OCI-LY7 (cell line): ENCODE measurements at regions of chr5 and their contacts with region 1.

Region 1: DNA sequence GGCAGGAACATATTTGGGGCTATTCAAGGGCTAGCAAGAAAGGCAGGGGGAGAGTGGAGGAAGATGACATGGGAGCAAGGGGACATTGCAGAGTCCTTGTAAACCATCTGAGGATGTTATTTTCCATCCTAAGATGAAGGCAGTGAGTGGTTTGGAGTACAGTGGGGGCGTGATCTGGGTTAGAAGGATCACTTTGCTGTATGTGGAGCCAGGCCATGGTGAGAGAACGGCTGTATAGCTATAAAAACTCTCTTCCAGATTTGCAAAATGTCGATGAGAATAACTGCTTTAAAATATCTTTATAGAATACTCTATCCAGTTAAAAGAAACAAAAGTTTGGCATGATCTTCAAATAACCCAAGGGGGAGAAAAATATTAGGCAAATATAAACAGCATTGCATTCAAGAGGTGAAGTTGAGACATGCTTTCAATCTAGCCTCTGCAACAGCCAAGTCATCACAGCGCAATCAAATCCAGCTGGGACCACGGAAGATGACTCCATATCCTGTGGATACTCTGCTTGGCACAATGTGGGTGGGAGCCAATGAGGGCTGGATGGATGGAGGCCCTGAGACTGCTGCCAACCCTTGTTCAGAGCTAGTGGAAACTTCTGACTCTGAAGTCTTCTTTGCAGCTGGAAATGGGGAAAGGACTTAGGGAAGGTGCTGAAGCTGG is 111.5 kb upstream of the BASP1 start:
- DNase-seq: no peak
- H3K4me3 ChIP-seq: no peak overlapping the region
- H3K27ac ChIP-seq: no peak overlapping the region
- H3K4me1 ChIP-seq: no peaks in the 10 kb centered on the region
- CTCF ChIP-seq: no peak

Region 2: DNA sequence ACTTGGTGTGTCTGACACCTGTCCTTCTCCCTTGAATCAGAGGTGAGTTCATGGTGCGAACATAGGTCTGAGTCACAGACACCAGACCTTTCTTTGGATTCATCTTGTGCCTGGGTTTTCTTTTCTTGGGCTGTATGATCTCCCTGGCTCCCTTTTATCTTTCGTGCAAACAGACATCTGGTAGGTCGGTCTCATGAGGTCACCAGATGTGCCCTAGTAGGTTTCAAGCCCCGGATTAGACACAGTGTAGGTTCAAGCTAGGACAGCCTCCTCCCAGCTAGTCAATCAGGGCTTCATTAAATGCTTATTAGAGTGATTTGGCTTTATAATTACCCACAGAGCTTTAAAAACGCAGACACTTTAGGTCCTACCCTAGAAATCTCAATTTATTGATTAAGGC is 63.8 kb before region 1 on chr5:
- CTCF ChIA-PET with region 1: no interaction called
- POLR2A ChIA-PET with region 1: no interaction called
- intact Hi-C with region 1: loop called (anchors 10 kb)
- DNase-seq: no peak
- H3K4me3 ChIP-seq: no peak overlapping the region
- H3K27ac ChIP-seq: no peak overlapping the region
- H3K4me1 ChIP-seq: no peaks in the 10 kb centered on the region
- CTCF ChIP-seq: no peak

Region 3: DNA sequence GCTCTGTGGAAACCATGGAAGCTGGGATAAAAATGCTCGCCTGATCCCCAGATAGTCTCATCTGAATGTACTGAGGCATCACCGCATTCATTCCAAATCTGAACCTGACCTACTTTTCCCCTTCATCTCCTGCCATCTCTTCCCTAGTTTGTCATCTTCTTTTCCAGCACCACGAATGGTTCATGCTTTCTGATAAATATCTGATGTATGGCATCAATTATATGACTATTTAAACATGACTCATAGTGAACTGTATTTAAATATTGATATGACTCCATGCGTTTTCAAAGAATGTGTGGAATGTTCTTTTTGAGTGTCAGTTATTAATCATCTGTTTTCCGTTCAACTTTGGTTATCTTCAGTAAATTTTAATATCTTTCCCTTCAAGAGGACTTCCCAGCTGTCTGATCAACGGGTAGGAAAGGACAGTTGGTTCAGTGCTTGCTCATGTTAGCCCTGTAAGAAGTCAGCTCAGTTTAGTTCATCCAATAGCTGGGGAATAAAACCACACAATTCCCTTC is 132.7 kb after region 1 on chr5:
- CTCF ChIA-PET with region 1: no interaction called
- POLR2A ChIA-PET with region 1: no interaction called
- intact Hi-C with region 1: no loop called
- DNase-seq: no peak
- H3K4me3 ChIP-seq: no peak overlapping the region
- H3K27ac ChIP-seq: no peak overlapping the region
- H3K4me1 ChIP-seq: peaks cover 3% of the 10 kb centered on the region
- CTCF ChIP-seq: no peak